Brain microvascular endothelial cell (primary cell): ENCODE measurements at regions of chr1 and their contacts with region 1.

Region 1: DNA sequence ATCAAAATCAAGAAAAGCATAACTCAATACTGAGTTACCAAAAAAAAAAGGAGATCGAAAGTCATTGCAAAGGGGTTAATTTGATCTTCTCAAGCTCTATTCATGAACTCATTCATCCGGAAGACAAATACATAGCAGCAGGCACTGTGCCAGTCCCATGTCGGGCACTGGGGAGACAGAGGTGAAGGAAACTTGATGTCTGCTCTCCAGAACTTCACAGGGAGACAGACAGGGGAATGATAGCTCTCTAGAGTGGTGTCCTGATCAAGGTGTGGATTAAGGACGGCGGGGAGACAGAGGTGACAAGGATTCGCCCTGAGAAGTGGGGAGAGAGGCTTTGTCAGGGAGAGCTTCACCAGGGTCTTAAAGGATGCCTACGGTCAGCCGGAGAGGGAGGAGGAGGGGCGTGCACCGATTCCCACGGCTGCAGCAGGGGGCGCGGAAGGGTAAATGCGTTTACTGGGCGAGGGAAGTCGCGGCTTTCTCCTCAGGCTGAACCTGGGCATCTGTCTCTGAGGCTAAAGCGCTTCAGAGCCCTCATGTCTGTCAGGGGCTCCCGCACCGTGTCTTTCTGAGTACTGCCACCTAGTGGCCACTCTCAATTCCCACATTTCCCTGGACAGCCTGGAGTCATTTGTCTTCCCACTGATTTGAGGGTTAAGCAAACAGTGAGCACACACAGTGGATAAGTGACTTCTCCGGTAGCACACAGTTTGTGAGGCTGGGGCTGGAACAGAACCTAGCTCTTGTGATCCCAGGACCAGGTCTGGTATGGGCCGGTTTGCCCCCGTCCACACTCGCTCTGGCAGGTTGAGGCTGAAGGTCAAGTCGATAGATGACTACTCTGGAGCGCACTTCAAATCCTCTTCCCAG is 152.8 kb downstream of the TENT5C start:
- DNase-seq: peak; percentile 79
- H3K4me3 ChIP-seq: peak overlapping the region; percentile 56
- H3K27ac ChIP-seq: no peak overlapping the region
- H3K27me3 ChIP-seq: no peaks in the 10 kb centered on the region
- CTCF ChIP-seq: peak; percentile 90

Region 2: DNA sequence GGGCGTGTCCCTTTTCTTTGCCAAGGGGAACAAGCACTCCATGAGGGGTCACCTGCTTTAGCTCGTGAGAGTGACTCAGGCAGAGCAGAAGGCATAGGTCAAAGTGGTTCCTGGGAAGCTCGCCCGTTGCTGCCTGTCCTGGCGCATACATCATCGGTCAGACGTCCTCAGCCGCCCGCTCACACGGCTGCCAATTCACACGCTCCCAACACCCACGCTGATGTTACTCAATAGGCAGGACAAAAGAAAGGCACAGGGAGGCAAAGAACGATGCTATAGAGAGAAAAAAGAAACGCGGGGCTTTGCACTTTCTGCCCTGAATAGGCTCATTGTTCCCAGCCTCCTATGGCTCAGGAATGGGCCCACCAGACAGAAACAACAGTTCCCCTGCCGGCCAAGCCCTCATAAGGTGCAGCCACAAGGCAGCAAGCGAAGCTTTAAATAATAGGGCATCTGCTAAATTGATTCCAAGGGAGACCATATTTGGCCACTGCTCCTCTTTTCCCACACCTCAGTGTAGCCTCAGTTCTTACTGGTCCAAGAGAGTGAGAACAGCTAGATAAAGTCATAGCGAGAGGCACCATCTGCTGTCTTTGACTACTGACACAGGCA is 586.7 kb before region 1 on chr1:
- in situ Hi-C with region 1: no loop called
- DNase-seq: peak; percentile 77
- H3K4me3 ChIP-seq: no peak overlapping the region
- H3K27ac ChIP-seq: no peak overlapping the region
- H3K27me3 ChIP-seq: no peaks in the 10 kb centered on the region
- CTCF ChIP-seq: no peak

Region 3: DNA sequence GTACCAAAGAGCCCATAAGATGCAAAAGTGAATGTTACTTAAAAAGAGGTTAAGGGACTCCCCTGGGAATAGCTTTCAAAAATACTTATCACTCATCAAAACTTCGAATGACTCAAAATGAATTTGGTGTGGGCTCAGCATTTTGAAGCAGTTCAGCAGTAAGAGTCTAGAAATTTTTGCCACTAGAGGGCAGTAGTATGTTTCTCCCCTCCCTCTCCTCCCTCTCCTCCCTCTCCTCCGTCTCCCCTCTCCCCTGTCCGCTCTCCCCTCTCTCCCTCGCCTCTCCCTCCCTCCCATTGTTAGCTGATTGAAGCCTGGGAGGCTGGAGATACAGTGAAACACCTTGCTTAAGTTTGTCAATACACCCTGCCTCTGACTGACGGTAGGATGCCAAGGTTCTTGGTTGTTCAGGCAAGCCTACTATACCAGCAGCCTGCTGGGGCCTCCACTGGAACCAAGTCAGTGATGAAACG is 223.6 kb before region 1 on chr1:
- in situ Hi-C with region 1: loop called (anchors 25 kb)
- DNase-seq: peak; percentile 62
- H3K4me3 ChIP-seq: no peak overlapping the region
- H3K27ac ChIP-seq: no peak overlapping the region
- H3K27me3 ChIP-seq: no peaks in the 10 kb centered on the region
- CTCF ChIP-seq: peak; percentile 76

Region 4: GRCh38 chr1:117719004-117719403 is 39.7 kb before region 1 on chr1:
- in situ Hi-C with region 1: no loop called
- DNase-seq: no peak
- H3K4me3 ChIP-seq: no peak overlapping the region
- H3K27ac ChIP-seq: no peak overlapping the region
- H3K27me3 ChIP-seq: no peaks in the 10 kb centered on the region
- CTCF ChIP-seq: no peak

Region 5: GRCh38 chr1:117802531-117803257 is 44.0 kb after region 1 on chr1:
- in situ Hi-C with region 1: no loop called
- DNase-seq: no peak
- H3K4me3 ChIP-seq: no peak overlapping the region
- H3K27ac ChIP-seq: no peak overlapping the region
- H3K27me3 ChIP-seq: no peaks in the 10 kb centered on the region
- CTCF ChIP-seq: no peak